ENCODE measurements at regions of chr6 and their contacts with region 1.

Region 1: GRCh38 chr6:53641348-53641747 is 24.2 kb downstream of the KLHL31 start:
- DNase-seq: no peak
- ATAC-seq: no peak
- H3K4me3 ChIP-seq: no peak overlapping the region
- H3K4me3 Mint-ChIP-seq: no peak overlapping the region
- H3K27ac ChIP-seq: no peak overlapping the region
- H3K27ac Mint-ChIP-seq: no peak overlapping the region
- H3K4me1 ChIP-seq: no peaks in the 10 kb centered on the region
- H3K4me1 Mint-ChIP-seq: peaks cover under 1 to 9% (median 2%) of the 10 kb centered on the region in 7 donors
- H3K27me3 ChIP-seq: no peaks in the 10 kb centered on the region
- H3K27me3 Mint-ChIP-seq: peaks cover 0 to 4% (median 0%) of the 10 kb centered on the region in 5 donors

Region 2: GRCh38 chr6:53664623-53665022 is 23.3 kb after region 1 on chr6:
- CTCF ChIA-PET with region 1: no interaction called
- POLR2A ChIA-PET with region 1: no interaction called
- intact Hi-C with region 1: loop called in 1 of 2 experiments (anchors 1 kb)
- DNase-seq: no peak
- ATAC-seq: no peak
- H3K4me3 ChIP-seq: no peak overlapping the region
- H3K4me3 Mint-ChIP-seq: no peak overlapping the region
- H3K27ac ChIP-seq: no peak overlapping the region
- H3K27ac Mint-ChIP-seq: no peak overlapping the region
- H3K4me1 ChIP-seq: no peaks in the 10 kb centered on the region
- H3K4me1 Mint-ChIP-seq: peaks cover 0 to 1% (median 0%) of the 10 kb centered on the region in 7 donors
- H3K27me3 ChIP-seq: no peaks in the 10 kb centered on the region
- H3K27me3 Mint-ChIP-seq: peaks cover 21 to 50% (median 42%) of the 10 kb centered on the region in 5 donors

Measured in naive thymus-derived CD4-positive, alpha-beta T cell (primary cell).